Lower lobe of right lung (tissue), 2 donors: ENCODE measurements at regions of chr20 and their contacts with region 1.

Region 1: GRCh38 chr20:62386383-62387218 is at the start of gene RPS21:
- DNase-seq: peak; percentile 95
- ATAC-seq: peak; percentile 95 to 97
- H3K4me3 ChIP-seq: peak within 1 kb of the TSS; percentile 95
- H3K27ac ChIP-seq: peak within 1 kb of the TSS; percentile 97
- H3K4me1 ChIP-seq: peaks cover 32% of the 10 kb centered on the region
- H3K27me3 ChIP-seq: no peaks in the 10 kb centered on the region
- CTCF ChIP-seq: no peak
- total RNA-seq, gene RPS21: 1,104 TPM

Region 2: GRCh38 chr20:62302341-62303058 is 84.1 kb before region 1 on chr20 and contains the start of gene ADRM1:
- intact Hi-C with region 1: loop called (anchors 10 kb)
- DNase-seq: peak; percentile 96
- ATAC-seq: peak; percentile 93 to 96
- H3K4me3 ChIP-seq: peak within 1 kb of the TSS; percentile 77
- H3K27ac ChIP-seq: peak within 1 kb of the TSS; percentile 97
- H3K4me1 ChIP-seq: peaks cover 23% of the 10 kb centered on the region
- H3K27me3 ChIP-seq: no peaks in the 10 kb centered on the region
- CTCF ChIP-seq: peak; percentile 90
- total RNA-seq, gene ADRM1: 63.9 TPM